Activated CD4-positive, alpha-beta memory T cell treated with anti-CD3 and anti-CD28 coated beads for 36 hours (primary cell): ENCODE measurements at regions of chr12 and their contacts with region 1.

Region 1: DNA sequence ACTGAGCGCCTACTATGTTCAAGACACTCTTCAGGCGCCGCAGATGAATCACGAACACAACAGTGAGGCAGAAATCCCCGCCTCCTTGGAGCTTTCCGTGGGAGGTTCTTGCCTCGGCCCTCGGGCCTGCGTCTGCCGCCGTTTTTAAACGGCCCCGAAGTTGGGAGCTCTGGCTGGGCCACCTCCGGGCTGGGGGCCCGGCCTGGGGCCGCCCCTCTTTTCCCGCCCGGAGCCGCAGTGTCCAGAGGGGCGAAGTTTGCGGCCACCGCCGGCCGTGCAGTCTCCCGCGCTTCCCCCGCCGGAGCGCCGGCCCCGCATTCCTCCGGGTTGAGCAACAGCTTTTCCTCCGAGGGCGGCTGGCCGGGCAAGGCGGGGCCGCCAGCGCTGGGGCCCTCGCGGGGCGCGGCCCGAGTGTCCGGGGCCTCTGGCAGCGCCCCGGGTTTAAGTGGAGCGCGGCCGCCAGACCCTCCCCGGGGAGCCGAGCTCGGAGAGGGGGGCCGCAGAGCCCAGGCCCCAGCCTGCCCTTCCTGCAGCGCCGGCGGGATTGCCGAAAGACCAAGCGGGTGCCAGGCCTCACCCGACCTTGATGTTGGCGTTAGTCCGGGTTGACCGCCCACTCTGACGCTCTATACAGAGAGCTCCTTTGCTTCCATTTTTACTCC is 18.7 kb upstream of the CTDSP2 start:
- DNase-seq: peak; percentile 83
- H3K4me3 Mint-ChIP-seq: peak overlapping the region; percentile 59
- H3K27ac Mint-ChIP-seq: no peak overlapping the region
- H3K4me1 Mint-ChIP-seq: peaks cover 4% of the 10 kb centered on the region
- H3K27me3 Mint-ChIP-seq: no peaks in the 10 kb centered on the region

Region 2: GRCh38 chr12:57836442-57837375 is 28.5 kb before region 1 on chr12:
- CTCF ChIA-PET with region 1: interaction called, 5 read pairs
- POLR2A ChIA-PET with region 1: interaction called, 3 read pairs
- intact Hi-C with region 1: loop called (anchors 1 kb)
- DNase-seq: peak; percentile 72
- H3K4me3 Mint-ChIP-seq: peak overlapping the region; percentile 48
- H3K27ac Mint-ChIP-seq: peak overlapping the region; percentile 86
- H3K4me1 Mint-ChIP-seq: peaks cover 93% of the 10 kb centered on the region
- H3K27me3 Mint-ChIP-seq: no peaks in the 10 kb centered on the region

Region 3: DNA sequence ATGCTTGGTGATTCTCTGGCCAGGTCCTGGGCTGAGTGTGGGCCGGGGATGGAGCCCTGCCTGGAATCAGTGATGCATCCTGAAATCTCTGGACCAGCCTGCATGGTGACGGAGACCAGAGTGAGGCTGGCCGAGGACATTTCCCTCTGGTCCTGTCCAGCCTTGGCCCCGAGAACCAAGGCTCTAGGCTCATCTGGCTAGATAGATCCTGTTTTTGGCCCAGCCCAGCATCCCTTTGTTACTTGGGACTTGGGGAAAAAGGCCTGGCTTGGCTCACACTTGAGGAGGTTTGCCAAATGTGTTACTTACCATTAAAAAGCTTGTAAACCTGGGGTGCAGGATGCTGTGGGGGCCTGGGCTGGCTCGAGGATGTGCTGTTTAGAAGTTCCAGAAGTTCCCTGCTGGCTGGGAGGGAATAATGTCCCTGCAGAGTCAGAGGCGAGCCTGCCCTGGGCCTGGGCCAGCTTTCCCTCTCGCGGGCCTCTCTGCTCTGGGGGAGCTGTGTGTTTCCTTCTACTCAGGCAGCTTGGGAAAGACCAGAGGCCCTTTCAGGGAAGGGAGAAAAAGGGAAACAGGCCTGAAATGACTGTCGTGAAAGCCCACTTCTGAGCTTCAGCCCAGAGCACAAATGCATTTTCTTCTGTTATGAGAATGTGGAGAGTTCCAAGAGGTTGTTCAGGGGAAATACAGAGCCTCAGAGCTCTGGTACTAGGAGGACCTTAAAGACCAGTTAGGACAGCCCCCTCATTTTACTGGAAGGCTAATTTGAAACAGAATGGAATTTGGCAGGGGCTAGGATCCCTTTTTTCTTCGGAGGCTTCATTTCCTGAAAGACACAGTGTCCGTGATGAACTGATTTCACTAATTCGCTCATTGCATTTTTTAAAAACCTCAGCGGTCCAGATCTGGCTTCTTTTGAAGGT is 28.5 kb after region 1 on chr12:
- CTCF ChIA-PET with region 1: interaction called, 5 read pairs
- POLR2A ChIA-PET with region 1: interaction called, 11 read pairs
- intact Hi-C with region 1: loop called (anchors 2 kb)
- DNase-seq: no peak
- H3K4me3 Mint-ChIP-seq: no peak overlapping the region
- H3K27ac Mint-ChIP-seq: peak overlapping the region; percentile 40
- H3K4me1 Mint-ChIP-seq: peaks cover 50% of the 10 kb centered on the region
- H3K27me3 Mint-ChIP-seq: no peaks in the 10 kb centered on the region